ENCODE measurements at regions of chr5 and their contacts with region 1.

Region 1: GRCh38 chr5:141564216-141564692 is 54.5 kb downstream of the DIAPH1 start:
- DNase-seq: peak; percentile 56 to 62
- H3K4me3 ChIP-seq: no peak overlapping the region
- H3K27ac ChIP-seq: peak overlapping the region; percentile 26; the same call in 1 of the 2 replicates
- H3K4me1 ChIP-seq: peaks cover 0 to 7% (median 3%) of the 10 kb centered on the region in 4 experiments; a peak in 4 of 7 replicates
- H3K27me3 ChIP-seq: no peaks in the 10 kb centered on the region
- CTCF ChIP-seq: peak in 2 of 3 experiments; percentile 96; a peak in 3 of 4 replicates
- EP300 ChIP-seq: peak in 1 of 2 experiments; percentile 89; a peak in 2 of 3 replicates
- POLR2A ChIP-seq: no peak
- RAD21 ChIP-seq: peak; percentile 55 to 65

Region 2: DNA sequence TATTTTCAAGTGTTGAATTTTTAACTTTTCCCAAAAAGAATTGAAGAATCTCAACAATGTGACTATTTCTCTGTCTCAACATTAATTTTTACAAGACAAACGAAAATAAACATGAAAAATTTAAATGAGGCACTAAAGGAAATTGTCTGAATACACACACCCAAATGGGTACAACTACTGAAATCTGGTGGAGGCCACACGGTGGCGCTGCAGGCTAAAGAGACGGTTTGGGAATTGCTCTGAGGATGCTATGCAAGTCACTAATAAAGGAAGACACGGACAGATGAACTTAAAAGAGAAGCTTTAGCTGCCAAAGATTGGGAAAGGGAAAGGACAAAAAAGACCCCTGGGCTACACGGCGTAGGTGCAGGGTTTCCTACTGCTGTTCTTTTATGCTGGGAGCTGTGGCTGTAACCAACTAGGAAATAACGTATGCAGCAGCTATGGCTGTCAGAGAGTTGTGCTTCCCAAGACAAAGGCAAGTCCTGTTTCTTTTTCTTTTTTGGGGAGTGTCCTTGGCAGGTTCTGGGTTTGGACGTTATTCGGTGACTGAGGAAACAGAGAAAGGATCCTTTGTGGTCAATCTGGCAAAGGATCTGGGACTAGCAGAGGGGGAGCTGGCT is 372.0 kb before region 1 on chr5 and contains the start of gene PCDHB10:
- CTCF ChIA-PET with region 1: interaction called, 19 read pairs
- POLR2A ChIA-PET with region 1: no interaction called
- DNase-seq: peak in 1 of 2 experiments; percentile 92
- H3K4me3 ChIP-seq: peak within 1 kb of the TSS; percentile 14 to 46 (median 35); a peak in 6 of 8 replicates
- H3K27ac ChIP-seq: no peak within 1 kb of the TSS
- H3K4me1 ChIP-seq: no peaks in the 10 kb centered on the region; a peak in 1 of 7 replicates
- H3K27me3 ChIP-seq: no peaks in the 10 kb centered on the region
- CTCF ChIP-seq: peak; percentile 72 to 83 (median 83)
- EP300 ChIP-seq: no peak
- POLR2A ChIP-seq: no peak
- RAD21 ChIP-seq: peak; percentile 82 to 84
- total RNA-seq, gene PCDHB10: 1.8 and 1.9 TPM in 2 replicates

Region 3: DNA sequence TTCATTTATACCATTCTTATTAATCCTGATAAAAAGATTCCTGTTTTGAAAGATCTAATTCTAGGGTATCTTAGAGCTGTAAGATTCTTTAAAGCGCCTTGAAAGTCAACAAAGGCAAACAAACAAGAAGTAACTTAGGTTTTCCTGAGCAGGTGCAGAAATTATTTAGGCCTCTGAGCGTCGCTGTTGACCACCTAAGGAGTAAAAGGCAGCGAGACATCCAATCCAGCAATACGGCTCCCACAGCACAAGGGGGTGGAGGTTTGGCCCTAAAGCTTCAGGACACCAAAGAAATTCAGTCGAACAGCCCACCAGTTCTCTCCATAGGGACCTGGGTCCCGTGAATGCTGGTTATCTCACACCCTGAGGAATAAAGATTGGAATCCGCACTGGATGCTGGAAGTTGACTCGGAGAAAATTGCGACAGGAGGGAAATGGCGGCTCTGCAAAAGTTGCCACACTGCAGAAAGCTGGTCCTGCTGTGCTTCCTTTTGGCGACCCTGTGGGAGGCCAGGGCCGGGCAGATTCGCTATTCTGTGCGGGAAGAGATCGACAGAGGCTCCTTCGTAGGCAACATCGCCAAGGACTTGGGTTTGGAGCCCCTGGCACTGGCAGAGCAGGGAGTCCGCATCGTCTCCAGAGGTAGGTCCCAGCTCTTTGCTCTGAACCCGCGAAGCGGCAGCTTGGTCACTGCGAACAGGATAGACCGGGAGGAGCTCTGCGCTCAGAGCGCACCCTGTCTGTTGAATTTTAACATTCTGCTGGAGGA is 225.5 kb before region 1 on chr5 and contains the start of gene PCDHGA2:
- CTCF ChIA-PET with region 1: interaction called, 19 read pairs
- POLR2A ChIA-PET with region 1: no interaction called
- DNase-seq: no peak
- H3K4me3 ChIP-seq: no peak within 1 kb of the TSS
- H3K27ac ChIP-seq: no peak within 1 kb of the TSS
- H3K4me1 ChIP-seq: no peaks in the 10 kb centered on the region
- H3K27me3 ChIP-seq: no peaks in the 10 kb centered on the region
- CTCF ChIP-seq: peak; percentile 10 to 77 (median 60)
- EP300 ChIP-seq: no peak
- POLR2A ChIP-seq: no peak
- RAD21 ChIP-seq: peak; percentile 58 to 65
- total RNA-seq, gene PCDHGA2: 0.31 and 0.32 TPM in 2 replicates

Region 4: GRCh38 chr5:141402553-141403260 is 161.5 kb before region 1 on chr5 and contains the start of gene PCDHGA9:
- CTCF ChIA-PET with region 1: interaction called, 36 read pairs
- POLR2A ChIA-PET with region 1: no interaction called
- DNase-seq: no peak
- H3K4me3 ChIP-seq: no peak within 1 kb of the TSS
- H3K27ac ChIP-seq: no peak within 1 kb of the TSS
- H3K4me1 ChIP-seq: no peaks in the 10 kb centered on the region
- H3K27me3 ChIP-seq: no peaks in the 10 kb centered on the region
- CTCF ChIP-seq: peak in 2 of 3 experiments; percentile 21 to 35; a peak in 3 of 4 replicates
- EP300 ChIP-seq: no peak
- POLR2A ChIP-seq: no peak
- RAD21 ChIP-seq: peak; percentile 33 to 46
- total RNA-seq, gene PCDHGA9: 1.1 and 1.2 TPM in 2 replicates

Region 5: DNA sequence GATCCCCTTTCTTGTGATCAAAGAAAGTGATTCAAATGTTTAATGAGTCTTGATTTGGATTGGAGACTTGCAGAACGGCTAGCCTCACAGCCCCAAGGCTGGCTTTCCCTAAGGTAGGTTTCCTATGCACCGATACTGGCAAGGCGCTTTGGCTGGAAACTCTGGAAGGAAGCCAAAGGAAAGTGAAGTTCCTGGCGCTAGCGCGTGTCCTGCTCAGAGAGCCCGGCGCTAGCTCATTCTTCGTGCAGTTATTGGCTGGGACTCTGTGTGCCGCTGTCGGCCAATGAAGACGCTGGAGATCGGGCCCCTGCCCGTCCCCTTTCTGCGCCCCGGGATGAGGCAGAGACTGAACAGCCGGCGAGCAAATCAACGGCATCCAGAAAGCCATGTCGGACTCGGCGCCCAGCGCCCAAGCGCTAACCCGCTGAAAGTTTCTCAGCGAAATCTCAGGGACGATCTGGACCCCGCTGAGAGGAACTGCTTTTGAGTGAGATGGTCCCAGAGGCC is 88.6 kb before region 1 on chr5 and contains the start of gene PCDHGC3:
- CTCF ChIA-PET with region 1: interaction called, 10 read pairs
- POLR2A ChIA-PET with region 1: no interaction called
- DNase-seq: peak in 1 of 2 experiments; percentile 86
- H3K4me3 ChIP-seq: peak within 1 kb of the TSS; percentile 68 to 85 (median 74)
- H3K27ac ChIP-seq: no peak within 1 kb of the TSS
- H3K4me1 ChIP-seq: peaks cover 0 to 5% (median 3%) of the 10 kb centered on the region in 4 experiments; a peak in 4 of 7 replicates
- H3K27me3 ChIP-seq: peaks cover 11 to 24% (median 23%) of the 10 kb centered on the region in 4 experiments
- CTCF ChIP-seq: peak; percentile 31 to 63 (median 49); a peak in 3 of 4 replicates
- EP300 ChIP-seq: no peak
- POLR2A ChIP-seq: no peak
- RAD21 ChIP-seq: peak; percentile 58 to 70
- total RNA-seq, gene PCDHGC3: 18.6 and 19.6 TPM in 2 replicates

Region 6: GRCh38 chr5:141532726-141533125 is 31.5 kb before region 1 on chr5:
- CTCF ChIA-PET with region 1: interaction called, 18 read pairs
- POLR2A ChIA-PET with region 1: no interaction called
- DNase-seq: no peak
- H3K4me3 ChIP-seq: no peak overlapping the region
- H3K27ac ChIP-seq: no peak overlapping the region
- H3K4me1 ChIP-seq: no peaks in the 10 kb centered on the region
- H3K27me3 ChIP-seq: no peaks in the 10 kb centered on the region
- CTCF ChIP-seq: no peak
- EP300 ChIP-seq: no peak
- POLR2A ChIP-seq: no peak
- RAD21 ChIP-seq: no peak

Region 7: GRCh38 chr5:141762790-141763368 is 198.6 kb after region 1 on chr5:
- CTCF ChIA-PET with region 1: no interaction called
- POLR2A ChIA-PET with region 1: no interaction called
- DNase-seq: no peak
- H3K4me3 ChIP-seq: no peak overlapping the region
- H3K27ac ChIP-seq: no peak overlapping the region
- H3K4me1 ChIP-seq: peaks cover 10 to 24% (median 21%) of the 10 kb centered on the region in 4 experiments
- H3K27me3 ChIP-seq: no peaks in the 10 kb centered on the region; a peak in 1 of 7 replicates
- CTCF ChIP-seq: peak in 1 of 3 experiments; percentile 18; a peak in 1 of 4 replicates
- EP300 ChIP-seq: no peak
- POLR2A ChIP-seq: no peak
- RAD21 ChIP-seq: peak; percentile 37 to 58; a peak in 3 of 4 replicates

Measured in H1 (cell line).